Ovary (tissue), 10 donors: ENCODE measurements at regions of chr3 and their contacts with region 1.

Region 1: GRCh38 chr3:62332835-62333244 is 40.5 kb downstream of the FEZF2 start:
- DNase-seq: no peak
- H3K4me3 ChIP-seq: no peak overlapping the region
- H3K27ac ChIP-seq: no peak overlapping the region
- H3K4me1 ChIP-seq: no peaks in the 10 kb centered on the region
- H3K27me3 ChIP-seq: no peaks in the 10 kb centered on the region
- CTCF ChIP-seq: peak in 2 of 3 donors; percentile 20 to 41
- EP300 ChIP-seq: no peak
- POLR2A ChIP-seq: no peak

Region 2: DNA sequence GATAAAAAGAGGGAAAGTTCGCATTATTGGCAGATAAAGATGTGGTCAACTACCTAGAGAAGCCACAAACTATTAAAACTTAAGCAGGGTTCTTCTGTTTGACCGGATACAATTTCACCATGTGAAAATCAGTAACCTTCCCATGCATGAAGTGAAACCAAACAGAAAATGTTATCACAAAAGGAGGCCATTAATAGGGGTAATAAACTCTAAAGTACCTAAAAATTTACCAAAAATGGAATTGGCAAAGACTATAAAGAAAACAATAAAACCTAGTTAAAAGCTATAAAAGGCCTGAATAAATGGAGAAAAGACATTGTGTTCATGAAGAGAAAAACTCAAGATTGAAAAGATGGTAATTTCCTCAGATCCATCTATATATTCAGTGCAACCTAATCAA is 42.9 kb before region 1 on chr3:
- intact Hi-C with region 1: loop called in 1 of 4 experiments (anchors 1 kb)
- DNase-seq: no peak
- H3K4me3 ChIP-seq: no peak overlapping the region
- H3K27ac ChIP-seq: no peak overlapping the region
- H3K4me1 ChIP-seq: no peaks in the 10 kb centered on the region
- H3K27me3 ChIP-seq: no peaks in the 10 kb centered on the region
- CTCF ChIP-seq: no peak
- EP300 ChIP-seq: no peak
- POLR2A ChIP-seq: no peak

Region 3: GRCh38 chr3:62415312-62415801 is 82.5 kb after region 1 on chr3:
- intact Hi-C with region 1: no loop called
- DNase-seq: no peak
- H3K4me3 ChIP-seq: no peak overlapping the region
- H3K27ac ChIP-seq: no peak overlapping the region
- H3K4me1 ChIP-seq: no peaks in the 10 kb centered on the region
- H3K27me3 ChIP-seq: no peaks in the 10 kb centered on the region
- CTCF ChIP-seq: no peak
- EP300 ChIP-seq: no peak
- POLR2A ChIP-seq: no peak

Region 4: GRCh38 chr3:62558549-62559112 is 225.8 kb after region 1 on chr3:
- intact Hi-C with region 1: loop called in 1 of 4 experiments (anchors 2 kb)
- DNase-seq: no peak
- H3K4me3 ChIP-seq: no peak overlapping the region
- H3K27ac ChIP-seq: no peak overlapping the region
- H3K4me1 ChIP-seq: no peaks in the 10 kb centered on the region
- H3K27me3 ChIP-seq: no peaks in the 10 kb centered on the region
- CTCF ChIP-seq: no peak
- EP300 ChIP-seq: no peak
- POLR2A ChIP-seq: no peak